Psoas muscle (tissue), 8 donors: ENCODE measurements at regions of chr1 and their contacts with region 1.

Region 1: GRCh38 chr1:153572569-153573015 is 6.9 kb upstream of the S100A2 start:
- DNase-seq: peak; percentile 82 to 90
- ATAC-seq: peak; percentile 87 to 89 (median 88)
- H3K4me3 ChIP-seq: no peak overlapping the region
- H3K27ac ChIP-seq: peak overlapping the region; percentile 75
- H3K4me1 ChIP-seq: peaks cover 23% of the 10 kb centered on the region
- H3K27me3 ChIP-seq: peaks cover 0 to under 1% (median 0%) of the 10 kb centered on the region in 3 donors
- CTCF ChIP-seq: peak; percentile 90

Region 2: GRCh38 chr1:153261281-153262069 is 311.1 kb before region 1 on chr1:
- intact Hi-C with region 1: no loop called
- DNase-seq: peak; percentile 35 to 57
- ATAC-seq: peak in 1 of 4 donors; percentile 37
- H3K4me3 ChIP-seq: peak overlapping the region; percentile 56
- H3K27ac ChIP-seq: no peak overlapping the region
- H3K4me1 ChIP-seq: peaks cover 4% of the 10 kb centered on the region
- H3K27me3 ChIP-seq: peaks cover 0 to 66% (median 19%) of the 10 kb centered on the region in 3 donors
- CTCF ChIP-seq: no peak

Region 3: GRCh38 chr1:153306303-153307220 is 266.0 kb before region 1 on chr1:
- intact Hi-C with region 1: no loop called
- DNase-seq: no peak
- ATAC-seq: no peak
- H3K4me3 ChIP-seq: no peak overlapping the region
- H3K27ac ChIP-seq: no peak overlapping the region
- H3K4me1 ChIP-seq: no peaks in the 10 kb centered on the region
- H3K27me3 ChIP-seq: peaks cover 0 to 2% (median 0%) of the 10 kb centered on the region in 3 donors
- CTCF ChIP-seq: no peak

Region 4: DNA sequence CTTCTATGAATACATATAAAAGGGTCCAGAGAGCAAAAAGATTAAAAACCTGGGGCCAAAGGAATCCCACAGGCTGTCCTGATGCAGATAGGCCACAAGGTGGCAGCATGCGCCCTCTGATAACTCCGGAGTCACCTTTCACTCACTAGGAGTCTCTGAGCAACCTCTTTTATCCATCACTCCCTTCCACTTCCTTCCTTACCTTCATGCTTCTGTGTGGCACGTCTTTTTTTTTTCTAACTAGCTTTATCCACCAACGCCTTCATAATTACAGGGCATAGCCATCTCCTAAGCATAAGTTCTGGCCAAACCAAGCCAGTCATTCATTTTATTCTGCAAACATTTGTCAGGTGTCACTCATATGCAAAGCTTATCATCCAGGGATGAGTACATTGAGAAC is 220.1 kb before region 1 on chr1:
- intact Hi-C with region 1: loop called in 1 of 2 experiments (anchors 5 kb)
- DNase-seq: peak; percentile 66 to 77
- ATAC-seq: peak; percentile 79 to 93 (median 86)
- H3K4me3 ChIP-seq: no peak overlapping the region
- H3K27ac ChIP-seq: no peak overlapping the region
- H3K4me1 ChIP-seq: no peaks in the 10 kb centered on the region
- H3K27me3 ChIP-seq: peaks cover 0 to 15% (median 3%) of the 10 kb centered on the region in 3 donors
- CTCF ChIP-seq: peak; percentile 94

Region 5: DNA sequence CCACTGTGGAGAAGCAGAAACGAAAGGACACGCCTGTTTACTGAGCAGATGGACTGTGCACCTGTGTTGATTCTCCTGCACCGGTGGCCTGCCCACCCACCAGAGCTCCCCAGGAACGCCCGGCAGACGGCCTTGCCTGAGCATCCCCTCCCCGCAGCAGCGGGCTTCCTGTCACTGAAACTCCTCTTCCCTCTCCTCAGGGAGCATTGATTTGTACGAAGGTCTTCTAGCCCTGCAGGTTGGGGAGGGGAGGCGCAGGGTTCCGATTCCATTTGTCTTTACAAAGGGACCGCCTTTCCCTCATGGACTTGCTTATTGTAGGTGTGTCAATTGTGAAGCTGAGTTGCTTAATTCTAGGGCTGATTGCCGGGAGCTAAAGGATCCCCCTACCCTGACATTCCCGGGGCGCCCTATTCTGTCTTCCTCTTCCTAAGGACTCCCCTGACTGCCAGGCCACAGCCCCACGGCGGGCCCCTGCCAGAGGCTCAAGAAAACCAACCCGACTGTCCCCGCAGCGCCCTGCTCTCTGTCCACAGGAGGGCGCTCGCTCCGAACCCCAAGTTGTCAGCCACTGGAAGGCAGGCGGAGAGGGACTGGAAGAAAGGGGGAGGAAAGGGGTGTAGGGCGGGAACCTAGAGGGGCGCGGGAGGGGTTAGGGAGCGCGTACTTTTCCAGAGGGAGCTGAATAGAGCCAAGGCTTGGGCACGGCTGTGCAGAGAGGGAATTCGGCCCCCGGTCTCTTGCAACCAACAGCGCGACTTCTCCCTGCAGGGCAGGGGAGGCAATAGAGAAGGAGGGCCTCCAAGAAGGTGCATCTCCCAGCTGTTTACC is 39.6 kb before region 1 on chr1:
- intact Hi-C with region 1: loop called (anchors 1 to 2 kb)
- DNase-seq: peak; percentile 88 to 92
- ATAC-seq: peak; percentile 58 to 77 (median 68)
- H3K4me3 ChIP-seq: peak overlapping the region; percentile 77
- H3K27ac ChIP-seq: peak overlapping the region; percentile 15
- H3K4me1 ChIP-seq: peaks cover 12% of the 10 kb centered on the region
- H3K27me3 ChIP-seq: peaks cover 0 to 12% (median 0%) of the 10 kb centered on the region in 3 donors
- CTCF ChIP-seq: peak; percentile 70

Region 6: GRCh38 chr1:153627797-153628626 is 55.4 kb after region 1 on chr1 and contains the start of gene S100A1:
- intact Hi-C with region 1: loop called in 1 of 2 experiments (anchors 1 kb)
- DNase-seq: peak; percentile 77 to 94
- ATAC-seq: peak; percentile 70 to 83 (median 76)
- H3K4me3 ChIP-seq: peak within 1 kb of the TSS; percentile 66
- H3K27ac ChIP-seq: peak within 1 kb of the TSS; percentile 100
- H3K4me1 ChIP-seq: peaks cover 58% of the 10 kb centered on the region
- H3K27me3 ChIP-seq: no peaks in the 10 kb centered on the region
- CTCF ChIP-seq: no peak
- total RNA-seq, gene S100A1: 785 to 1,205 (median 1,028) TPM

Region 7: DNA sequence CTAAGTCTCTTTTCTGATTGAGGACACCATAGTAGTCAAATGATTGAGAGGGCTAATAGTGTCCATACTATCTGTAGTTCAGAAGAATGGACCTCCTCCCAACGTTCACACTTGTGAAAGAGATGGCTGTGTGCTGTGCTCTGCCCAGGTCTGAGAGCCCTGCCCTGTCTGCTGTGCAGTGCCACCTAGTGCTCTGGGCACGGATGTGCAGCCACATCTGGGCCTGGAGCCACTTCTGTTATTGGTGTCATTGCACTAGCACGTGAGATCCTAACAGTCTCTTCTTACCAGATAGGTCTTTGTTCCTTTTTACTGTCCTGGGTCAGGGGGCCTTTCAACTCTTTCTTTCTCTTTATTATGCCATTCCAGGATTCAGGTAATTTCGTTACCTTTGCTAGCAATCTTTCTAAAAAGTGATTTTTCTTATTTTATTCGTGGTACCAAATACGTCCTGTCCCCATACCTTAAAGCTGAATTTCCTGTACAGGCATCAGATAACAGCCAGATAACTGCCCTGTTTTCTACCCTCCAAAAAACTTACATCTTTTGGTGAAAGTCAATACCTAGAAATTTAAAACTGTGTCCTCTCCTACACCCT is 176.9 kb after region 1 on chr1:
- intact Hi-C with region 1: loop called (anchors 5 to 10 kb)
- DNase-seq: peak; percentile 86 to 92
- ATAC-seq: peak; percentile 95 to 97 (median 97)
- H3K4me3 ChIP-seq: no peak overlapping the region
- H3K27ac ChIP-seq: peak overlapping the region; percentile 41
- H3K4me1 ChIP-seq: peaks cover 38% of the 10 kb centered on the region
- H3K27me3 ChIP-seq: no peaks in the 10 kb centered on the region
- CTCF ChIP-seq: peak; percentile 97